ENCODE measurements at regions of chr14 and their contacts with region 1.

Region 1: GRCh38 chr14:99518441-99519346 is 37.5 kb downstream of the CCNK start:
- DNase-seq: no peak
- H3K4me3 ChIP-seq: no peak overlapping the region
- H3K27ac ChIP-seq: no peak overlapping the region
- H3K4me1 ChIP-seq: peaks cover 8 to 30% (median 10%) of the 10 kb centered on the region in 3 donors
- H3K27me3 ChIP-seq: no peaks in the 10 kb centered on the region
- CTCF ChIP-seq: peak; percentile 93 to 99 (median 96)
- POLR2A ChIP-seq: no peak

Region 2: GRCh38 chr14:99628832-99629618 is 110.3 kb after region 1 on chr14:
- intact Hi-C with region 1: loop called (anchors 2 kb)
- DNase-seq: no peak
- H3K4me3 ChIP-seq: no peak overlapping the region
- H3K27ac ChIP-seq: no peak overlapping the region
- H3K4me1 ChIP-seq: peaks cover 0 to 36% (median 7%) of the 10 kb centered on the region in 3 donors
- H3K27me3 ChIP-seq: peaks cover 0 to 3% (median 0%) of the 10 kb centered on the region in 4 donors
- CTCF ChIP-seq: peak; percentile 75 to 99 (median 96)
- POLR2A ChIP-seq: no peak